ENCODE measurements at regions of chr11 and their contacts with region 1.

Region 1: GRCh38 chr11:75547580-75548058 is 14.4 kb upstream of the SERPINH1 start:
- DNase-seq: peak; percentile 82 to 89
- ATAC-seq: peak; percentile 85
- H3K4me3 ChIP-seq: no peak overlapping the region
- H3K27ac ChIP-seq: no peak overlapping the region
- H3K4me1 ChIP-seq: no peaks in the 10 kb centered on the region
- H3K27me3 ChIP-seq: no peaks in the 10 kb centered on the region

Region 2: DNA sequence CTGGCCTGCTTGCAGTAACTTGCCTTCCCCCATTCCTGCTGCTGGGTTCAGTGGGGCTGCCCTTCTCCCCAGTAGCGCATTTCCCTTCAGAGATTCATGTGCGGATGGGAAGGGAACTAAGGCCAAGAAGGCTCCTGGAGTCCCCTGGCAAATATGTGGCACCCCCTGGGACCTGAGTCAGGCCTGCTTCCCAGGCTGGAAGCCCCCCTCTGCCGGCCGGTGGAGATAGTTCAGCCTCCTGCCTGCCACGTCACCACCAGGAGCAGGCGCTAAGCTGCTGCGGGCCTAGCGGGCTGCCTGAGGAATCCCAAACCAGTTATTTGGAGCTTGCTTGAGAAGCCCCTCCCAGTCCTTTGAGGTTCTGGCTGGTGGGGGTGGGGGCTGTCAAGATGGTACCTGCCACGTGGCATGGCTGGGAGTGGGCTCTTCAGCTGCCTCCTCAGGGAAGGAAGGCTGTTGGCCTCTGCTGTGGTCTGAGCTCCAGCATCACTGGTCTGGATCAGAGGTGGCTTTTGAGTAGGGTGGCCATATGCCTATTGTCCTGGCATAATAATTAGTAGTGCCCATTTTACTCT is 16.4 kb after region 1 on chr11:
- intact Hi-C with region 1: loop called in 1 of 2 experiments (anchors 2 kb)
- DNase-seq: peak; percentile 86 to 96
- ATAC-seq: peak; percentile 54
- H3K4me3 ChIP-seq: peak overlapping the region; percentile 73
- H3K27ac ChIP-seq: peak overlapping the region; percentile 80 to 97
- H3K4me1 ChIP-seq: peaks cover 0 to 5% of the 10 kb centered on the region in 2 donors
- H3K27me3 ChIP-seq: no peaks in the 10 kb centered on the region

Region 3: GRCh38 chr11:75577207-75577606 is 29.6 kb after region 1 on chr11:
- intact Hi-C with region 1: loop called (anchors 2 kb)
- DNase-seq: peak; percentile 58 to 89
- ATAC-seq: no peak
- H3K4me3 ChIP-seq: no peak overlapping the region
- H3K27ac ChIP-seq: no peak overlapping the region
- H3K4me1 ChIP-seq: no peaks in the 10 kb centered on the region
- H3K27me3 ChIP-seq: no peaks in the 10 kb centered on the region

Measured in aorta (tissue), 5 donors.